ENCODE measurements at regions of chr4 and their contacts with region 1.

Region 1: DNA sequence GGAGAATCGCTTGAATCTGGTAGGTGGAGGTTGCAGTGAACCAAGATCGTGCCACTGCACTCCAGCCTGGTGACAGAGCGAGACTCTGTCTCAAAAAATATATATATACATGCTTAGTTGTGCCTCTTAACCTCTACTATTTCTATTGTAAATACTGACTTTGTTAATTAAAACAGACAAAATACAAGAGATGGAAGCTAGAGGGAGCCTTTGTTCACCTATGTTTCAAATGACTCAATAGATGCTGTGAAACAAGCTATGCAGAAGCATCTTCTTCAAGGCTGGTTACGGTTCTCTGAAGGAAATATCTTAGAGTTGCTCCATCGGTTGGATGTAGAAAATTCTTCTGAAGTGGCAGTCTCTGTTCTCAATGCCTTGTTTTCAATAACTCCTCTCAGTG is 6.2 kb downstream of the NCAPG start:
- H3K4me3 Mint-ChIP-seq: no peak overlapping the region
- H3K27ac Mint-ChIP-seq: no peak overlapping the region
- H3K4me1 Mint-ChIP-seq: peaks cover 18% of the 10 kb centered on the region
- H3K27me3 Mint-ChIP-seq: no peaks in the 10 kb centered on the region

Region 2: DNA sequence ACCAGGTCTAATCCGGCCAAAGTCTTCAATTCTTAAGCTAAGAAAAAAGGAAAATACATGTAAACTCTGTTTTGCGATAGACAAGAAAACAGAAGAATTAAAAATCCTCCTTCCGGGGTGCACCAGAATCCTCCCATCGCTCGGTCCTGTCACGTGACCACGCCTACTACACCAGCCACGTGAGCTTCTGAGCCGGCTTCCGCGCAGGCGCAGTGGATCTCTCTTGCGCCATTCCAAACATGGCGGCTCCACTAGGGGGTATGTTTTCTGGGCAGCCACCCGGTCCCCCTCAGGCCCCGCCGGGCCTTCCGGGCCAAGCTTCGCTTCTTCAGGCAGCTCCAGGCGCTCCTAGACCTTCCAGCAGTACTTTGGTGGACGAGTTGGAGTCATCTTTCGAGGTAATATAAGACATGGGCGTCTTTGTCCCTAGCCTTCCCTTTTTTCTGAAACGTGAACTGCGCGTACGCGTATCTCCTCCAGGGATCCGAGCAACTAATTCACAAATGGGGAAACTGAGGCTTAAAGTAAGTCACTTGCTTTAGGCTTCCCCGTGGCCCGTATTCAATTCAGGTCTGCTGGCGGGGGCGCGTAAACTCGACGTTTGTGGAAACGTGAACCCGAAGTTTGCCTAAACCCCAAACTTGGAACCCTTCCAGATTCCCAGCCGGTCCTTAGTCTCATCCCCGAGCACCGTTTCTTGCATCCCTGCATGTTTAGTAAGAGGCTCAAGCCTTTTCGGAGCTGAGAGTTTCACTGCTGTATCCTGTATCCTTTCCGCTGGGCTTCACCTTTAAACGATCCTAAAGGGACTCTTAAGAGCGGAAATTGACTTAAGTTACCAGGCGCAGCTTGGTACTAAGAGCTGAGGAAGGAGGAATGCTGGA is 202.4 kb before region 1 on chr4 and contains the start of gene MED28:
- intact Hi-C with region 1: no loop called
- H3K4me3 Mint-ChIP-seq: peak within 1 kb of the TSS; percentile 91
- H3K27ac Mint-ChIP-seq: peak within 1 kb of the TSS; percentile 98
- H3K4me1 Mint-ChIP-seq: peaks cover 37% of the 10 kb centered on the region
- H3K27me3 Mint-ChIP-seq: no peaks in the 10 kb centered on the region

Region 3: DNA sequence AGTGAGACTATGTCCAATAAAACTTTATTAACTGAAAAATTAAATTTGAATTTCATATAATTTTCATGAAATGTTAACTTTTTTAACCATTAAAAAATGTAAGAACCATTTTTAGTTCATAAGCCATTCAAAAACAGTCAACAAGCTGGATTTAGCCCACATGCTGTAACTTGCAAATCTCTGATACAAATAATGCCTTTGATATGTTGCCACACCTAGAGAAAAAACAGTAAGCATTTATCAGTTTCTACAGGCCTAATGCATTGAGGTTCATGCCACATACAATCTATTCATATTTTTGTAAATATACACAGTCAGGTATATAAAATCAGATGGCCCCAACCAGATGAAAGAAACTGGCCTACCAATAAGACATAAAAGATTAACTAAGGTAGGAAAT is 151.7 kb after region 1 on chr4:
- intact Hi-C with region 1: no loop called
- H3K4me3 Mint-ChIP-seq: no peak overlapping the region
- H3K27ac Mint-ChIP-seq: no peak overlapping the region
- H3K4me1 Mint-ChIP-seq: no peaks in the 10 kb centered on the region
- H3K27me3 Mint-ChIP-seq: no peaks in the 10 kb centered on the region

Region 4: DNA sequence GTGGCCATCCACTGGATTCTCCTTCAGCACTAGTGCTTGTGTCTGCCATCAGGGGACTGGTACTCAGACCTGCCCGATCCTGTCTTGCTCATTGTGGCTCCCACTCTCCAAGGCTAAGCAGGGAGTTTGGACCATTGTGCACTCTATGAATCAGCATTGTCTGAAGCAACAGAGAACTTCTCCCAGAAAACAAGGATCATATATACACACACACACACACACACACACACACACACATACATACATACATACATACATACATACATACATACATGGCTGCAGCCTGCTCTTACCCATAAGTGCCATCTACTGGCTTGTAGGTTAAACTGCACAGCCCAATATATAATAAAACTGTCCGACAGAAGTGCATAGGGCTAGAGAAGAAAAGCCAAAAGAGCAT is 549.9 kb after region 1 on chr4:
- intact Hi-C with region 1: loop called (anchors 2 kb)
- H3K4me3 Mint-ChIP-seq: no peak overlapping the region
- H3K27ac Mint-ChIP-seq: no peak overlapping the region
- H3K4me1 Mint-ChIP-seq: no peaks in the 10 kb centered on the region
- H3K27me3 Mint-ChIP-seq: no peaks in the 10 kb centered on the region

Region 5: DNA sequence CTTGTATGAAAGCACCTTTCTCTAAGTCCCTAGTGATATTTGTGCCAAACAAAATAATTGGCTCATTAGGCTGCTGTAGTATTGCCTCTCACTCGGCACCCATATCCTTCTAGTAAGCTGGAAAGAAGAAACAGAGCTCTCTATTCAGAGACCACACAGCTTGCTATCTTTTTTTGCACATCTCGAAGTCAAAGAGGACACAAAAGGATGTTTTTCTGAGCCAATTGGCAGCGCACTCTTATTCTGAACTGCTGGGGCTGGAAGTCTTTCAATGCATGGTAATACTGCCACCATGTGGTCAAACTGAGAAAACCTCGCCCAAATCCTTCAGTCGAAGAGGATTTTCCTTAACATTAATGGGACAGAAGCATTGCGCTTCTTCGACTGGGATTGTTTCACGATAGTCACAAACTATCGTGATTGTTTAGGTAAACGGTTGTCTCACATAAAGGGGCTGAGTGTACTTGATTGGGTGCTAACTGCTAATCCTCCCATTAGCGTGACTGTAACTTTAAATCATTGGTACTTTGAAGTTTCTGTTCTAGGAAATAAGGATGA is 776.5 kb after region 1 on chr4:
- intact Hi-C with region 1: loop called (anchors 1 kb)
- H3K4me3 Mint-ChIP-seq: no peak overlapping the region
- H3K27ac Mint-ChIP-seq: no peak overlapping the region
- H3K4me1 Mint-ChIP-seq: peaks cover 5% of the 10 kb centered on the region
- H3K27me3 Mint-ChIP-seq: no peaks in the 10 kb centered on the region

Measured in dendritic cell treated with granulocyte-macrophage colony-stimulating factor and Interleukin-4, amounts not matched to agents 40 ng/mL and 50 ng/mL, for 4 days (primary cell).